Activated CD8-positive, alpha-beta T cell treated with anti-CD3 and anti-CD28 coated beads for 36 hours (primary cell): ENCODE measurements at regions of chr7 and their contacts with region 1.

Region 1: DNA sequence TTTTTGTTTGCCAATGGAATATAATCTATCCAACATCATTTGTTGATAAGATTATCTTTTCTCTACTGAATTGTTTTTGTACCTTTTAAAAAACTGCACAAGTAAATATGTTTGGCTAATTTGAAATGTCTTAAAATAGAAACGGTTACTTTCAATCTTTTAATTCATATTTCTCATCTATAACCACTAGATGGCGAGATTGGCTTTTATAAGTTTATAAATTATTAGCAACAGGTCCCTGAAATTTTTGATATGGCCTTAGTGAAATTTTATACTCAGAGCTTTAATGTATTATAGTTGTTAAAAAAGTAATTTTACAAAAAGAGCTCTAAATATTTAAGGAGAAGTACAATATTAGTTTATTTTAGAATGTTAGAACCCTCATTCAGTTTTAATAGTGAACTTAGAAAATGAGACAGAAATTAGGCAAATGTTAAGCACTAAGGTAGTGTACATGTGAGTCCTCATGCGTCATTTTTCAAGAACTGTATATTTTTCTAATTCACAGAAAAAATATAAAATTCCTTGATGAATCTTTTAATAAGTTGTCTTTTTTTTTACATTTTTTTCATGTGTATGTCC is 592.5 kb downstream of the ARL4A start:
- DNase-seq: no peak
- ATAC-seq: no peak
- H3K4me3 Mint-ChIP-seq: no peak overlapping the region
- H3K27ac Mint-ChIP-seq: no peak overlapping the region
- H3K4me1 Mint-ChIP-seq: no peaks in the 10 kb centered on the region
- H3K27me3 Mint-ChIP-seq: peaks cover 4% of the 10 kb centered on the region
- CTCF ChIP-seq: peak; percentile 63

Region 2: GRCh38 chr7:13290975-13291374 is 11.0 kb after region 1 on chr7:
- CTCF ChIA-PET with region 1: interaction called, 16 read pairs
- POLR2A ChIA-PET with region 1: no interaction called
- intact Hi-C with region 1: no loop called
- DNase-seq: no peak
- ATAC-seq: no peak
- H3K4me3 Mint-ChIP-seq: no peak overlapping the region
- H3K27ac Mint-ChIP-seq: no peak overlapping the region
- H3K4me1 Mint-ChIP-seq: no peaks in the 10 kb centered on the region
- H3K27me3 Mint-ChIP-seq: peaks cover 5% of the 10 kb centered on the region
- CTCF ChIP-seq: no peak

Region 3: DNA sequence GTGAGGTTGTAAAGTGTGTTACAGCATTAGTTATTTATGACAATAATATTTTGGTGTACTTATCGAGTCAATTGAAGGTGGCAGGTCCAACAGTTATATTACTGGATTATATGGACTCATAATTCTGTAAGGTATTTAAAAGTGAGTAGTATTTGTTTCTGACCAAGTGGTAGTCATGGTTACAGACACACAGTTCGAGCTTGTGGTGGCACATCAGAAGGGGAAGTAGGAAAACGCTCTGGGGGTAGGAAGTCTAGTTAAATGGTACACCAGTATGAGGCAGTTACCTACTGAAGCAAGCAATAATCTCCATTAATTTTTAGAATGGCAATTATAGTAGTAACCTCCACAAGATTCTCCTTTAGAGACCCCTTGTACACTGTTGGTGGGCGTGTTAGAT is 168.3 kb after region 1 on chr7:
- CTCF ChIA-PET with region 1: no interaction called
- POLR2A ChIA-PET with region 1: no interaction called
- intact Hi-C with region 1: no loop called
- DNase-seq: no peak
- ATAC-seq: no peak
- H3K4me3 Mint-ChIP-seq: no peak overlapping the region
- H3K27ac Mint-ChIP-seq: no peak overlapping the region
- H3K4me1 Mint-ChIP-seq: no peaks in the 10 kb centered on the region
- H3K27me3 Mint-ChIP-seq: no peaks in the 10 kb centered on the region
- CTCF ChIP-seq: no peak

Region 4: GRCh38 chr7:14457568-14458453 is 1177.9 kb after region 1 on chr7:
- CTCF ChIA-PET with region 1: interaction called, 5 read pairs
- POLR2A ChIA-PET with region 1: no interaction called
- intact Hi-C with region 1: loop called (anchors 10 kb)
- DNase-seq: peak; percentile 59
- ATAC-seq: no peak
- H3K4me3 Mint-ChIP-seq: no peak overlapping the region
- H3K27ac Mint-ChIP-seq: no peak overlapping the region
- H3K4me1 Mint-ChIP-seq: no peaks in the 10 kb centered on the region
- H3K27me3 Mint-ChIP-seq: peaks cover 2% of the 10 kb centered on the region
- CTCF ChIP-seq: peak; percentile 80